ENCODE measurements at regions of chr18 and their contacts with region 1.

Region 1: DNA sequence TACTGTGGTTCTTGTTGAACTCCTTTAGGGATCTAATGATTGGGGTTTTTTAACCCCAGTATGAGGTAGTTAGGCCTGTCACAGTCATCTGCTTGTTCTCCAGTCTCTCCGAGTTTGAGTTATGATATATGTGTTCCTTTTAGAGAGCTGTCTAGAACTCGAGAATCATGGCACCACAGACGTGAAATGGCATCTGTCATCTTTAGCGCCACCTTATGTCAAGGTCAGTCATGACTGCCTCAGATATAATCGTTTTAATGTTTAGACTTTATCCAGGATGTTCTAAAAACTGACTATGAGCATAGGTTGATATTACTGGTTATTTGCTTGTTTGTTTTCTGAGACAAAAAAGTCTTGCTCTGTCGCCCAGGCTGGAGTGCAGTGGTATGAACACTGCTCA is 112.2 kb downstream of the CEP192 start:
- DNase-seq: no peak

Region 2: DNA sequence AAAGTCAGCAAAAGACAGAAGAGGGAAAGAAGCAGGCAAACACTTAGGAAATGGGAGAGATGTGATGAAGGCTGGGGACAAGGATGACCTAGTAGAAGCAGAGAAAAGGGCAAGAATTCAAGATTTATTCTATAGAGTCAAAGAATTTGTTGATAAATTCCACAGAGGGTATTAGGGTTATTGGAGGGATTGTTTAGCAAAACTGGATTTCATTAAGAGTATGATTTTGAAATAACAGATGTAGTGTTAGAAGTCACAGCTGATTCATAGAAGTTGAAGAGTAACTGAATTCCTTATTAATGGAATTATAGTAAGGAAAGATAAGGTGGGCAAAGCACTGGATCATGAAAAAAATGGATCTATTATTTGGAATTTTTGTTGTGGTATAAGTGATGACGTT is 63.6 kb before region 1 on chr18:
- intact Hi-C with region 1: loop called (anchors 5 kb)
- DNase-seq: no peak

Region 3: DNA sequence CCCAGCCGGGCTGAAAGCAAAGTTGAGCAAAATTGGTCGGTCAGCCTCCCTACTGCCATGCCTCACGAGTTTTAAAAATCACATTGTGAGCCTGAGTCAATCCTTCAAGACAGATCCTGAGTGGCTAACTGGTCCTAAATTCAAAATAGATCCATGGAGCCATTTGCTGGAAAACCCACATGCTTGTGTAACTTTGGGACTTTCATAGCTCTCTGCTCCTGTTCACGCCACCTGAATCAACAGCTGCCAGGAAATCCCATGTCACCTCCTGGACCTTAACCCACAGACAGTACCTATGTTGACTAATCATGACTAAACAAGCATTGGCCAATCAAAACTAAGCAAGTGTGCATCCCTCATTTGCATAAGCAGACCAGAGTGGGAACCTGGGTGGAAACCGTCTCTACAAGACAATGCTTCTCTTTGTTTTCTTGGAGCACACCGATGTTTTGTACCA is 72.4 kb after region 1 on chr18:
- intact Hi-C with region 1: no loop called
- DNase-seq: no peak